ENCODE measurements at regions of chr4 and their contacts with region 1.

Region 1: GRCh38 chr4:87030755-87031441 is 96.1 kb downstream of the AFF1 start:
- DNase-seq: no peak
- ATAC-seq: peak; percentile 25
- H3K4me3 Mint-ChIP-seq: no peak overlapping the region
- H3K27ac Mint-ChIP-seq: no peak overlapping the region
- H3K4me1 Mint-ChIP-seq: peaks cover 27% of the 10 kb centered on the region
- H3K27me3 Mint-ChIP-seq: no peaks in the 10 kb centered on the region
- CTCF ChIP-seq: no peak

Region 2: GRCh38 chr4:86927843-86928395 is 103.0 kb before region 1 on chr4:
- CTCF ChIA-PET with region 1: interaction called, 10 read pairs
- POLR2A ChIA-PET with region 1: interaction called, 5 read pairs
- DNase-seq: no peak
- ATAC-seq: no peak
- H3K4me3 Mint-ChIP-seq: no peak overlapping the region
- H3K27ac Mint-ChIP-seq: no peak overlapping the region
- H3K4me1 Mint-ChIP-seq: peaks cover 9% of the 10 kb centered on the region
- H3K27me3 Mint-ChIP-seq: no peaks in the 10 kb centered on the region
- CTCF ChIP-seq: no peak

Region 3: DNA sequence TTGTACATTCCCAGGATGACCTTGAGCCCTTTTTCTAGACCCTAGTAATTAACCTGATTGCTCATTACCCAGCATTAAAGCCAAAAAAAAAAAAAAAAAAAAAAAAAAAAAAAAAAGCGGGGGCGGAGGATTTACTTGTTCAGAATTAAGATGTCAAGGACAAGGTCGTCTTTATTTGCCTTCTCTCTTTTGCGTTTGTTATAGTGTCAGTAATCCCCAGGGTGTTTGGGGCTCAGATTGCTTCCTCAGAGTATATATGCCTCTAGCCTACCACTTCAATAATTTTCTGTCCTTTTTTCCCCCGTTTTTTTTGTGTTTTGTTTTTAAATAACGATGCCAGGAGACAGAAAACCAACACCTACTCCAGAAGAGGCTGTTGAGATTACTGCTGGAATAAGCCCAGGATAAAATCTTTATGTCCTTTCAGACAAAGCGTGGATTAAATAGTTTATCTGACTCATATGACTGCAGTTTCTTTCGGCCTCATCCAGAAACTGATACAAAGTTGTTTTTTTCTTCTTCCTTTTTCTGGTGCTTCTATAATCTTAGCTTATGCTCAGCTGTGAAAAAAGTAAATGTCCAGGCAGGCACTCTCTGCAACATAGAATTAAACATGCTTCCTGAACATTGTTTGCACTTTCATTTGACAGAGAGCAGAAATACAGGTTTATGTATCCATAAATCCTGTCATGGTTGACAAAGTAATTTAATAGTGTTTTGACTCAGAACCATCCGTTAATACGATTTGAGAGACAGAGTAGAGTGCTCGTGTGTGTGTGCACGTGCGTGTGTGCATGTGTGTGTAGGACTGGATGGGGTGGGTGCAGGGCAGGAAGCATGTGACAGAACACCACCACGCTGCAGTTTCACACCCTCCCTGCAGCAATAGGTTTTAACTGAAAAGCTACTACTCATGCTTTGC is 42.6 kb after region 1 on chr4:
- CTCF ChIA-PET with region 1: no interaction called
- POLR2A ChIA-PET with region 1: no interaction called
- DNase-seq: no peak
- ATAC-seq: peak; percentile 27; the same call in 1 of the 2 replicates
- H3K4me3 Mint-ChIP-seq: no peak overlapping the region
- H3K27ac Mint-ChIP-seq: peak overlapping the region; percentile 51
- H3K4me1 Mint-ChIP-seq: peaks cover 66% of the 10 kb centered on the region
- H3K27me3 Mint-ChIP-seq: no peaks in the 10 kb centered on the region
- CTCF ChIP-seq: no peak